RWPE1 (cell line): ENCODE measurements at regions of chr9 and their contacts with region 1.

Region 1: DNA sequence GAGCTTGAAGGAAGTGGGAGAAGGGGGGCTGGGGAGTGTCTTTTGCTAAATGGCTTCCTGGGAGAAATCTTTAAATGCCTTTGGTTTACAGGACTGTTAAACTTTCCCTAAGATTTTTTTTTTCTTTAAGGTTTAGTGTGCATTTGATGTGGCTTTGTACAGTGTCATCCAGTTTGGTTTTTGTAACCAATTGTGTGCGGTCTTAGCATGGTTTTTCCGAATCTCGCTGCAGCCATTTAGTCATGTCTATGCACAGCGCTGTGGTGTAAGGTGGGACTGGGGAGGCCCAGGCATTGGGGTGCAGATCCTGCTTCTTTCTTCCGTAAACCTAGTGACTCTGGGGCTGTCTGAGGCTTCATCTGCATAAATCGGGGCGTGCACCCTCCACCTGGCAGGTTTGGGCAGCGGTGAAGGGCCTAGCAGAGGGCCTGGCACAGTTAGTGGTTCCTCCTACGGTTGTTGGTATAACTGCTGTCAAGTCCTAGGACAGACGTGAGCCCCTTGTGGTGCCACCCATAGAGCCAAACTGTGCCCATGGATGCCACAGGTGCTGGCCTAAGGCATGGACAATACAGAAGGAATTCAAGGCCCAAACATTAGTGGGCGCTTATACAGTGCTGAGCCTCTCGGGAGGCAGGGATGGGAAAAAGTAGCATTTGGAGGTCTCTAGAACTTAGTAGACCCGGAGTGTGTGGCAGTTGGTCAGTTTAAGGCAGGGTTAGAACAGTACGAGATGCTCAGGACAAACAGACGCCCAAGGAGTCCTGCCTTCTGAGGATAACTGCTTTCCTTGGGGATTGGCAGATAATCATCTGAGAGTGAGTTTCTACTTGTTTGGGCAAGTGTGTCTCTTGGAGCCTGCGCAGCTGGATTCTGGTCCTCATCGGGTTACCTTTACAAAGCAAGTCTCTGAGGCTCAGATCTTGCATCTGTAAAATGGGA is 1.5 kb downstream of the PRRC2B start:
- DNase-seq: peak; percentile 76
- H3K27ac ChIP-seq: peak overlapping the region; percentile 99
- CTCF ChIP-seq: no peak

Region 2: GRCh38 chr9:131237931-131238401 is 157.5 kb before region 1 on chr9:
- CTCF ChIA-PET with region 1: no interaction called
- POLR2A ChIA-PET with region 1: no interaction called
- DNase-seq: peak; percentile 54
- H3K27ac ChIP-seq: no peak overlapping the region; the same call in 1 of the 2 replicates
- CTCF ChIP-seq: no peak

Region 3: DNA sequence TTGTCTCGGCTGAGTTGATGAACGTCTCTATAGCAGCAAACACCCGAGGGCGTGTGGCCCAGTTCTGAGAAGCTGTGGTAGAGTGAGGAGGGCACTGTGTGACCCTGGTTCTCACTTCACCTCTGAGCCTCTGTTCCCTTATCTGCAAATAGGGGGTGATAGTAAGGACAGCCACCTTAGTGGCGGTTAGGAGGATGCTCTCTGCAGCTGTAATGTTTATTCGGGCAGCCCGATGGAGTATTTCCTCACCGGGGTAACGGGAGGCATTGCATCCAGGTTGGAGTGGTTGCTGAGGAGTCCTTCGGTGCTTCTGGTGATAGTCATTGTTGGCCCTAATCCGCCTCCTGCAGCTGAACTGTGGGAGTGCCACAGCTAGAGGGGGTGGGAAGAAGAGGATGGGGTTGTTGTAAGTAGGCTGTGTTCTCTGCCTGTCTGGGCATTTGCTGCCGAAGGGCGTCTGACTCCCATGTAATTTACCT is 12.3 kb after region 1 on chr9:
- CTCF ChIA-PET with region 1: interaction called, 10 read pairs
- POLR2A ChIA-PET with region 1: no interaction called
- DNase-seq: peak; percentile 55
- H3K27ac ChIP-seq: peak overlapping the region; percentile 59
- CTCF ChIP-seq: no peak; the same call in 1 of the 2 replicates

Region 4: DNA sequence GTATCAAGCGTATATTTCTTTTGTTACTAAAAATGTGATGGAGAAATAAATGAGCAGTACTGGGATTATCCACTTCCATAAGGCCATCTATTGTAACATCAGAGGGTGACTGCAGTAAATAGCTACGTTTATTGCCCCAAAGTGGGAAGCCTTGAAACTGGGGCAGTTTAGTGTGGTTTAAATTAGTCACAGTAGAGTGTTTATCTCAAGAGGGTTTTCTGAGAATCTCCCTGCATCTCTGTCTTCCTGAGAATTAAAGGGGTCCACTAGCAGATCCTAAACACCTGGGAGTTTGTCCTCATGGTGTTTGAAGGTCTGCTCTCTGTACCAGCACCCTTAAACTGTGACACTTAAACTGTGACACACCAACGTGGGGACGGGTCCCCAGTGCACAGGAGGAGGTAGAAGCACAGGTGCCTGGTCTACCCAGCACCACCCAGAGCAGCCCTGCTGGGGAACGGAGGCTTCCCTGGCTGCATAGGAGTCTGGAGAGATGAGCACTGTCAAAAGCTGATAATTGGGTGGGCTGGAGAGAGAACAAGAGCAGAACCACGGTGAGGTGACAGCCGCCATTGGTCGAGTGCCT is 23.7 kb after region 1 on chr9:
- CTCF ChIA-PET with region 1: interaction called, 11 read pairs
- POLR2A ChIA-PET with region 1: interaction called, 4 read pairs
- DNase-seq: no peak
- H3K27ac ChIP-seq: peak overlapping the region; percentile 92
- CTCF ChIP-seq: no peak

Region 5: DNA sequence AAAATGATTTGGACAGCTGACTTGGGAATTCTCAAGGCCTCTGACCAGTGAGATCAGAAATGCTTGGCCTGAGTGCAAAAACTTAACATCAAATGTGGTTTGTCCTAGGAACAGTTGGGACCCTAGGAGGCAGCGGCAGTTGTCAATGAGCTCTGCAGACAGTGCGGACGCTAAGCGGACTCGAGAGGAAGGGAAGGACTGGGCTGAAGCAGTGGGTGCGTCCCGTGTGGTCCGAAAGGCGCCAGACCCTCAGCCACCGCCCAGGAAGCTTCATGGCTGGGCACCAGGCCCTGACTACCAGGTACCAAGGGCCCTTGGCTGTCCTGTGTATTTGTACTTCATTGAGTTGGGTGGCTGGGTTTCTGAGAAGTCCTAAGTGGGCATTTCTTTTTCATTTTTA is 63.6 kb after region 1 on chr9:
- CTCF ChIA-PET with region 1: interaction called, 11 read pairs
- POLR2A ChIA-PET with region 1: no interaction called
- DNase-seq: no peak
- H3K27ac ChIP-seq: peak overlapping the region; percentile 24
- CTCF ChIP-seq: no peak

Region 6: DNA sequence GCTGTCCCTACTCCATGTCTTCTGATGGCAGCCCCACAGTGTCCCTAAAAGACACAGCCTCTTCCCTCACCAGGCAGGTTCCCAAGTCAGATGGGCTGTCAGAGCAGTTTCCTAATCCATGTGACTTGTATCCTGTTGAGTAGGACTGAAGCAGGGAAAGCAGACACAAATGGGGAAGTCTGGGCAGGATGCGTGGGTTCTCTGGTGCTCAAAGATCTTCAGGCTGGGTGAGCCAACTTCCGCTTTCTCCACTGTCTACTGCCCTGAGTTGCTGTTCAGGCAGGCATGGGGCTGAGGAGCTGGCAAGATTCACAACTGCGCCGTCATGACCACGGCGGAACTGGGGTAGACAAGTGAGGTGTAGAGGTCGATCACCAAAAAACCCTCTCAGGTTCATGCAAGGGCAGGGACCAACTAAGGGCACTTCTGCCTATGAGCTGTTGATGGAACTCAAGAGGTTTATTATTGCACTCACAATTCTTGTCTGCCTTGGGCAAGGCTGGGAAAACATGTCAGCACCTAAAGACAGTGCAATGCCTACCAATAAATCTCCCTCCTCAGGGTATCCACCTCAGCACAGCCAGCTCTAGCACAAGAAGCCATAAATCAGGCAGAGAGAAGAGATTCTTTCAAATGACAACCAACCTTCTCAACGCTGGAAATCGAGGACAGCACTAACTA is 261.1 kb after region 1 on chr9:
- CTCF ChIA-PET with region 1: no interaction called
- POLR2A ChIA-PET with region 1: no interaction called
- DNase-seq: no peak
- H3K27ac ChIP-seq: peak overlapping the region; percentile 85
- CTCF ChIP-seq: no peak

Region 7: DNA sequence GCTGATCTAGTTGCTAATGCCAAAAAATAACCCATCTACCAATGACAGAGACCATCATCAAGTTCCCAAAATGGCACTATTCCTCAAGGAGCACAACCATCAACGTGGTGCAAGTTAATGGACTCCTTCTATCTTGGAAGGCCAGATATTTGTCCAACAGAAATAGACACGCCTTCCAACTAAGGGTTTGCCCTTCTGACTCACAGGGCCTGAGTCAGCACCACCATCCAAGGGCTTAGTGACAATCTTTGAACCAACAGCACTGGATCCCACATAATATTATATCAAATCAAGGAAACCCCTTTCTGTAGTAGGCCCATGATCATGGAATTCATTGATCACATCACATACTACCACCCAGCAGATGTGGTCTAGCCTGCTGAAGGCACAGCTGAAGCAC is 600.0 kb after region 1 on chr9:
- CTCF ChIA-PET with region 1: no interaction called
- POLR2A ChIA-PET with region 1: no interaction called
- DNase-seq: peak; percentile 56
- H3K27ac ChIP-seq: no peak overlapping the region
- CTCF ChIP-seq: no peak